ENCODE measurements at regions of chr18 and their contacts with region 1.

Region 1: GRCh38 chr18:72995558-72995957 is 127.8 kb upstream of the NETO1 start:
- DNase-seq: peak; percentile 82
- ATAC-seq: peak; percentile 60
- H3K4me3 ChIP-seq: peak overlapping the region; percentile 13; the same call in 1 of the 2 replicates
- H3K27ac ChIP-seq: peak overlapping the region; percentile 76
- H3K4me1 ChIP-seq: peaks cover 54% of the 10 kb centered on the region
- H3K27me3 ChIP-seq: no peaks in the 10 kb centered on the region
- CTCF ChIP-seq: no peak

Region 2: GRCh38 chr18:72922895-72923294 is 72.7 kb before region 1 on chr18:
- CTCF ChIA-PET with region 1: no interaction called
- POLR2A ChIA-PET with region 1: no interaction called
- intact Hi-C with region 1: loop called (anchors 2 kb)
- DNase-seq: no peak
- ATAC-seq: no peak
- H3K4me3 ChIP-seq: no peak overlapping the region
- H3K27ac ChIP-seq: no peak overlapping the region
- H3K4me1 ChIP-seq: no peaks in the 10 kb centered on the region
- H3K27me3 ChIP-seq: no peaks in the 10 kb centered on the region
- CTCF ChIP-seq: no peak

Region 3: GRCh38 chr18:73043226-73044020 is 47.9 kb after region 1 on chr18:
- CTCF ChIA-PET with region 1: no interaction called
- POLR2A ChIA-PET with region 1: no interaction called
- intact Hi-C with region 1: no loop called
- DNase-seq: no peak
- ATAC-seq: no peak
- H3K4me3 ChIP-seq: no peak overlapping the region
- H3K27ac ChIP-seq: no peak overlapping the region
- H3K4me1 ChIP-seq: no peaks in the 10 kb centered on the region
- H3K27me3 ChIP-seq: no peaks in the 10 kb centered on the region
- CTCF ChIP-seq: no peak

Region 4: GRCh38 chr18:73101977-73102376 is 106.4 kb after region 1 on chr18:
- CTCF ChIA-PET with region 1: no interaction called
- POLR2A ChIA-PET with region 1: no interaction called
- intact Hi-C with region 1: loop called (anchors 10 kb)
- DNase-seq: peak; percentile 62
- ATAC-seq: peak; percentile 73
- H3K4me3 ChIP-seq: no peak overlapping the region
- H3K27ac ChIP-seq: peak overlapping the region; percentile 95
- H3K4me1 ChIP-seq: peaks cover 14% of the 10 kb centered on the region
- H3K27me3 ChIP-seq: no peaks in the 10 kb centered on the region
- CTCF ChIP-seq: no peak

Region 5: DNA sequence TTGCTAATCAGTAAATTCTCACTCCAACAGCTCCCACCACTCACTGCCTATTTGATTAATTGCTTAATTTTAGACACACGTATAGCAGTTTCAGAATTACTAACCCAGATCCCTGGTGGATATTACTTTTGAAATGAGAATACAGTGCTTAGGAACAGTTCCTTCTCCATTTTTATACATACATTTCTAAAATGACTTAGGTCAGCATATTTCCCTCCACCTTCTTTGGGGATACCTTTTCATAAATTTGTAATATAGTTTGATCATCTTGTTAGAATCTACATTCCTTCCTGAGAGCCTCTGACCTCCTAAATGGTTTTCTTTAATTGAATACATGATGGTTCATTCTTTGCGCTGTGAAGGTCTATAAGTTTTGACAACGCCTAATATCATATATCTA is 152.0 kb after region 1 on chr18:
- CTCF ChIA-PET with region 1: no interaction called
- POLR2A ChIA-PET with region 1: no interaction called
- intact Hi-C with region 1: no loop called
- DNase-seq: no peak
- ATAC-seq: no peak
- H3K4me3 ChIP-seq: no peak overlapping the region
- H3K27ac ChIP-seq: no peak overlapping the region
- H3K4me1 ChIP-seq: no peaks in the 10 kb centered on the region
- H3K27me3 ChIP-seq: no peaks in the 10 kb centered on the region
- CTCF ChIP-seq: no peak